ENCODE measurements at regions of chr5 and their contacts with region 1.

Region 1: DNA sequence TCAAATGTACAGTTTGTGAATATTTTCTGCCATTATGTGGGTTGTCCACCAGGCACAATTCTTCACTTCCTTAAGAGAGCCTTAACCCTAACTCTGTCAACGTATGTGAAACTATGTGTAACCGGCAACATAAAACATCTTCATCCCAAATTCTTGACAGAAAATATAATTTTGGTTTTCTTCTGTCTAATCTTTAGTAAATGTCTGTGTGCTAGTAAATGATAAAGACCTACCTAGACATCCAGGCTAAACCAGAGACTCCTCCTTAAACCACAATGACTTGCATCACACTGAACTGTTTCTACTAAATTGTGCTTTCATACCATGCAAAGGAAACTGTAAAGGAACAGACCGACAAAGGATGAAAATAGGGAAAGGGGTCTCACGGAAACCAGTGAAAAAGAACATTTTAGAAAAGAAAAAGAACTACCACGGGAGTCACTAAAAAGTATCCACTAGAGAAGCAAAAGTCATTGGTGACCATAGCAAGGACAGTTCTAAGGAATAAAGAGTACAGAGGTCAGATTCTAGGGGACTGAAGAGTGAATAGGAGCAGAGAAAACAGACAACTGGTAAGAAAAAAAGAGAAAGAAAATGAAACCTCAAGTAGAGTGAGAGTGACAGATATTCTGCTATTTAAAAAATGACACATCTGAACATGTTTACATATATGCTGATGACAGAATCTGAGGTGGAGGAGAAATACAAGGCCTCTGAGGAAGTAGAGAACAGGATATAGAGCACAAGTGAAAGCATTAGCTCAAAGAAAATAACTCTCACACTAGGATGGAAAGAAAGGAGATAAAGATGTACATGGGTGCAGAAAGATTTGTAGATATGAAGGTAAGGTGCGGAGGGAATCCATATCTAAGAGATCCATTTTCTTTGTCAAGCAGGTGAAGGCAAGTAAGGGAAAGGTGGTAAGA is 49.4 kb downstream of the FNIP1 start:
- DNase-seq: peak; percentile 68 to 88 (median 76)
- ATAC-seq: peak; percentile 88
- H3K4me3 ChIP-seq: peak overlapping the region; percentile 2; the same call in 1 of the 2 replicates
- H3K27ac ChIP-seq: peak overlapping the region; percentile 86
- H3K4me1 ChIP-seq: peaks cover 18 to 55% of the 10 kb centered on the region in 2 experiments
- H3K27me3 ChIP-seq: no peaks in the 10 kb centered on the region
- CTCF ChIP-seq: peak in 1 of 3 experiments; percentile 30; a peak in 2 of 6 replicates
- EP300 ChIP-seq: peak; percentile 98
- POLR2A ChIP-seq: 0 out of 2 replicates have a peak, but pooled peaks have one; percentile 23
- RAD21 ChIP-seq: peak in 1 of 2 experiments; percentile 6; a peak in 2 of 4 replicates

Region 2: GRCh38 chr5:131634996-131635754 is 112.3 kb before region 1 on chr5 and contains the start of gene RAPGEF6:
- CTCF ChIA-PET with region 1: no interaction called
- POLR2A ChIA-PET with region 1: interaction called, 3 read pairs
- in situ Hi-C with region 1: no loop called
- intact Hi-C with region 1: loop called (anchors 5 kb)
- DNase-seq: peak; percentile 89 to 99 (median 90)
- ATAC-seq: peak; percentile 87
- H3K4me3 ChIP-seq: peak within 1 kb of the TSS; percentile 70
- H3K27ac ChIP-seq: peak within 1 kb of the TSS; percentile 99
- H3K4me1 ChIP-seq: peaks cover 18 to 52% of the 10 kb centered on the region in 2 experiments
- H3K27me3 ChIP-seq: no peaks in the 10 kb centered on the region
- CTCF ChIP-seq: peak; percentile 4 to 34 (median 21); a peak in 5 of 6 replicates
- EP300 ChIP-seq: peak; percentile 74
- POLR2A ChIP-seq: peak; percentile 93
- RAD21 ChIP-seq: no peak; a peak in 1 of 4 replicates
- polyA plus RNA-seq, gene RAPGEF6: 2.7 to 3.6 TPM

Region 3: GRCh38 chr5:131735393-131735792 is 12.1 kb before region 1 on chr5:
- CTCF ChIA-PET with region 1: no interaction called
- POLR2A ChIA-PET with region 1: interaction called, 10 read pairs
- in situ Hi-C with region 1: no loop called
- intact Hi-C with region 1: no loop called
- DNase-seq: no peak
- ATAC-seq: no peak
- H3K4me3 ChIP-seq: no peak overlapping the region
- H3K27ac ChIP-seq: no peak overlapping the region
- H3K4me1 ChIP-seq: no peaks in the 10 kb centered on the region; a peak in 1 of 5 replicates
- H3K27me3 ChIP-seq: no peaks in the 10 kb centered on the region
- CTCF ChIP-seq: no peak
- EP300 ChIP-seq: no peak
- POLR2A ChIP-seq: no peak
- RAD21 ChIP-seq: no peak